ENCODE measurements at regions of chr12 and their contacts with region 1.

Region 1: DNA sequence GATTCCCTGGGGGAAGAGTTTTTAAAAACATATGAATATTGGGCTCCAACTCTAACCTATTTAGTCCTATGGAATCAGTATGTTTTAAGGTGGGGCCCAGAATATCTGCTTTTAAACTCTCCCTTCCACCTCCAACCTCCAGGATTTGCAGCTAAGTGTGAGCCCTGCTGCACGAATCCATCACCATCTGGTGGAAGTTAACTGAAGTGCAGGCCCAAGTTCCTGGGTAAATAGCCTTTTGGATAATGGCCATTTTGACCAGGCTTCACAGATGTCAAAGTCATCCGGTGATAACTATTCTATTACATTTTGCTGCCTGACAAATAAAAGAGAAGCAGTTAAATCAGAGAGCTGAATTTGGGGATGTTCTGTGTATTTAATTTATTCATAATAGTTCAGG is 58.1 kb upstream of the RMST start:
- DNase-seq: peak; percentile 61 to 62
- H3K4me3 ChIP-seq: no peak overlapping the region
- H3K4me3 Mint-ChIP-seq: no peak overlapping the region
- H3K27ac Mint-ChIP-seq: no peak overlapping the region
- H3K4me1 ChIP-seq: no peaks in the 10 kb centered on the region
- H3K4me1 Mint-ChIP-seq: no peaks in the 10 kb centered on the region
- H3K27me3 ChIP-seq: no peaks in the 10 kb centered on the region
- H3K27me3 Mint-ChIP-seq: no peaks in the 10 kb centered on the region
- CTCF ChIP-seq: peak; percentile 85

Region 2: DNA sequence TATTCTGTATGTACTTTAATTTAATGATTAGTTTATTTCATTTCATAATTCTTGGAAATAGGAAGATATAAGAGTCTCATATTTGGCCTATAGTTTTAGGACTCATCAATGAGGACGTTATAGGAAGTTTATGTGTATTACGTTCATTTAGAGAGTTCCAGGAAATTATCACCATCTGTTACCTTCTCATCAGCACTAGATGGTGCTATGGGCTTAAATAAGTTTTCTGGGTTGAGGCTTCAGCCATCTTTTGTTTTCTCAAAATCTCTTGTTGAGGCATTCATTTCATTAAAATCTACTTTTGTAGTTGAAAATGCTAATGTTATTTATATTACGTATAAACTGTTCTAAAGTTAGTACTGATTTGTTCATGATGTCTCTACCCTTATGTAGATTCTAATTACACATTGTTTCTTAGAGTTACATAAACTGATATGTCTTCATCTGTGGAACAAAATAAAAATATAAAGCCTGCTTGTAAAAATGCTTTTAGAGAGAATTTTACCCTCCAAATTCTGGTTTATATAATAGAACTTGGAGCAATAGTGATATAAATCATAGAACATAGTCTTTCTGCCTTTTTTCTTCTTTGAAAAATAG is 825.9 kb before region 1 on chr12:
- CTCF ChIA-PET with region 1: no interaction called
- POLR2A ChIA-PET with region 1: no interaction called
- intact Hi-C with region 1: loop called (anchors 10 kb)
- DNase-seq: peak in 1 of 2 experiments; percentile 33
- H3K4me3 ChIP-seq: no peak overlapping the region
- H3K4me3 Mint-ChIP-seq: no peak overlapping the region
- H3K27ac Mint-ChIP-seq: no peak overlapping the region
- H3K4me1 ChIP-seq: no peaks in the 10 kb centered on the region
- H3K4me1 Mint-ChIP-seq: no peaks in the 10 kb centered on the region
- H3K27me3 ChIP-seq: no peaks in the 10 kb centered on the region
- H3K27me3 Mint-ChIP-seq: peaks cover 3% of the 10 kb centered on the region
- CTCF ChIP-seq: peak; percentile 45 to 54

Region 3: GRCh38 chr12:97308576-97309198 is 95.9 kb before region 1 on chr12:
- CTCF ChIA-PET with region 1: no interaction called
- POLR2A ChIA-PET with region 1: no interaction called
- intact Hi-C with region 1: loop called (anchors 5 kb)
- DNase-seq: peak in 1 of 2 experiments; percentile 45
- H3K4me3 ChIP-seq: no peak overlapping the region
- H3K4me3 Mint-ChIP-seq: no peak overlapping the region
- H3K27ac Mint-ChIP-seq: no peak overlapping the region
- H3K4me1 ChIP-seq: no peaks in the 10 kb centered on the region; the same call in 1 of the 2 replicates
- H3K4me1 Mint-ChIP-seq: peaks cover 6% of the 10 kb centered on the region
- H3K27me3 ChIP-seq: no peaks in the 10 kb centered on the region
- H3K27me3 Mint-ChIP-seq: no peaks in the 10 kb centered on the region
- CTCF ChIP-seq: peak; percentile 61 to 68

Region 4: DNA sequence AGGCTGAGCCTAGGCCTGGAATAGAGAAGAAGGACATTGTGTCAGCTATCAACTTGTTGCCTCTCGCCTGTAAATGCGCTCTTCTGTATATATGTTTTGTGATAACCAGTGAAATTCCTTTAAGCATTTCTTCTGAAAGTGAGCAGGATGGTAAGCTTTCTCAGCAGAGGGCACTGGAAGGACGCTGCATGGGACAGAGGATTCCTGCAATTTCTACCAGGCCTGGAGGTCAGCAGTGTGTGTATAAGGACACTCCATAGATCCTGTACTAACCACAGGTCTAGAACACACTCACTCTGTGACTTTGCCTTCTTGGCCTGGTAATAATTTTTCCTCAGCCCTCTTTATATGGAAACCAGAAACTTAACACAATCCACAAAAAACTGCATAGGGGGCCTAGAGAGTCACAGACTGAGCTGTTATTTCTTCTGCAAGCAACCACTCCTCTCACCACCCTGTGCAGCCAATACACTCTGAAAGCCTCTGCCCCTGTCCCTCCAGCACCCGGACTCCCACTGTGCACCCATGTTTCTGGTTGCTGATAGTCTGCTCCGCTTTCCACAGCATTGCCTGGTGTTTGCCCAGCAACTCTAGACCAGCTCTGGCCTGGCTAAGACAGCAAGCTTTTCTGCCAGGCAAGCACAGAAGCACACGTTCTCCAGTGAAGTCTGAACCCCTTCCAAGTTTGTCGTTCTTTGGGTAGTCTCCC is 35.9 kb before region 1 on chr12:
- CTCF ChIA-PET with region 1: no interaction called
- POLR2A ChIA-PET with region 1: no interaction called
- intact Hi-C with region 1: loop called (anchors 1 kb)
- DNase-seq: peak in 1 of 2 experiments; percentile 11
- H3K4me3 ChIP-seq: no peak overlapping the region
- H3K4me3 Mint-ChIP-seq: no peak overlapping the region
- H3K27ac Mint-ChIP-seq: no peak overlapping the region
- H3K4me1 ChIP-seq: no peaks in the 10 kb centered on the region
- H3K4me1 Mint-ChIP-seq: peaks cover 6% of the 10 kb centered on the region
- H3K27me3 ChIP-seq: no peaks in the 10 kb centered on the region
- H3K27me3 Mint-ChIP-seq: no peaks in the 10 kb centered on the region
- CTCF ChIP-seq: peak in 1 of 2 experiments; percentile 22

Region 5: GRCh38 chr12:97386133-97386581 is 18.4 kb before region 1 on chr12:
- CTCF ChIA-PET with region 1: no interaction called
- POLR2A ChIA-PET with region 1: no interaction called
- intact Hi-C with region 1: no loop called
- DNase-seq: peak; percentile 40 to 41
- H3K4me3 ChIP-seq: no peak overlapping the region
- H3K4me3 Mint-ChIP-seq: no peak overlapping the region
- H3K27ac Mint-ChIP-seq: no peak overlapping the region
- H3K4me1 ChIP-seq: peaks cover 8% of the 10 kb centered on the region; the same call in 1 of the 2 replicates
- H3K4me1 Mint-ChIP-seq: peaks cover 7% of the 10 kb centered on the region
- H3K27me3 ChIP-seq: no peaks in the 10 kb centered on the region
- H3K27me3 Mint-ChIP-seq: no peaks in the 10 kb centered on the region
- CTCF ChIP-seq: no peak